ENCODE measurements at regions of chr12 and their contacts with region 1.

Region 1: DNA sequence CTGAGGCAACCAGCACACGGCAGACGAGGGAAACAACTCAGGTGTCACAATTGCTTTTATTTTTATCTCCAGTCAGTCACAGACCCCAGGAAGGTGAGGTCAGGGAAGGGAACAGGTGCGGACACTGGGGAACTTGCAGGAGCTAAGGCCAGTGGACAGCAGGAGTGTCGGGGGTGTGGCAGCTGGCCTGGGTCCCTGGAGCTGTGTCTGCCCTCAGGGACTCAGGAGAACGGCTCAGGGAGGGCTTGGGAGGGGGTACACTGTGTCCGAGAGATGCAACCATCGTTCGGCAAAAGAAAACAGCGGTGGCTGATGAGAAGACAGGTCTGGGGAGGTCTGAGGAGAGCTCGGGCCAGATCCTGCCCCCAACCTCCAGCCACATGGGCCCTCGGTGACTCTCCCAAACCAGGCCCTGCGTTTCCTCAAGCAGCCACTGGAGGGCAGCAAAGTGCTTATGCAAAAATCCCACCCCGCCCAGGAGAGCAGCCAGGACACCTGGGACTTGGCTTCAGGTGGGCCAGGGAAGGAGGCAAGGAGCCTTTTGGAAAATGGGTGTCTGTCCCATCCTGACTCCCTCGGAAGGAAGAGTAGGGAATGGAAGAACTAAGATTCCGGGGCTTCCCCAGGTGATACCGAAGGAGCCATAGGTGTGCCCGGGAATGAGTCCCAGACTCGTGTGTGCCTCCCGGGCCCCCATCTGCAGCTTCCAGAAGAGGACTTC is 24.1 kb upstream of the BCDIN3D start:
- DNase-seq: peak; percentile 46 to 80 (median 62)
- ATAC-seq: peak; percentile 86
- H3K4me3 ChIP-seq: no peak overlapping the region
- H3K4me3 Mint-ChIP-seq: no peak overlapping the region
- H3K27ac ChIP-seq: no peak overlapping the region
- H3K27ac Mint-ChIP-seq: no peak overlapping the region
- H3K4me1 ChIP-seq: no peaks in the 10 kb centered on the region
- H3K4me1 Mint-ChIP-seq: peaks cover 0 to 6% (median 0%) of the 10 kb centered on the region in 7 donors
- H3K27me3 ChIP-seq: no peaks in the 10 kb centered on the region
- H3K27me3 Mint-ChIP-seq: peaks cover 0 to 4% (median 0%) of the 10 kb centered on the region in 5 donors

Region 2: DNA sequence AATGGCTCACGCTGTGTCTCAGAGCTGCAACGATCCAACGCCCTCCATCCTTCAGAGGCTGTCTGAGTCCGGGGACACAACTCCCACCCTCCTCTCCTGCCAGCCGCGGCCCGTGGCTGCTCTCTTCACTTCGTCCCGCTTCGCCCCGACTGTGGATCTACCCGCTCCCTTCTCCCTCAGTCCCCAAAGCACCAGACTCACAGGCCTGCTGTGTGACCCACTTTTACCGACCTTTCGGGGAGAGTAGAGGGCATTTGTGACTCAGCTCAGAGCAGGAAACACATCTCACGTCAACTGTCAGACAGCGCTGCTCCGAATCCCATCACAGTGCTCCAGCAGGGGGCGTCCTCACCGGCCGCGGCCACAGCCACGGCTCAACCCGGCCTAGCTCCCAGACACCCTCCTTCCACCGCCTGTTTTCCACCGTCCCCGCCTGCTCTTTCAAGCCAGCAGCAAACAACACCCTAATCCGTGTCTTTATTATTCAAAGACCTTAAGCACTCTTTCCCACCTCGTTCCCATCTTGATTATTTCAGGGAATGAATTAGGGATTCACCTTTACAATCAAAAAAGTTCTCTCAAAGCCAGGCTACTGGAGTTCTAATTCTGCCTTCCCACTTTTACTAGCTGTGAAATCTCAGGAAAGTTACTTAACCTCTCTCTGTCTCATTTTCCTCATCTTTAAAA is 78.5 kb after region 1 on chr12:
- CTCF ChIA-PET with region 1: interaction called, 4 read pairs
- POLR2A ChIA-PET with region 1: no interaction called
- intact Hi-C with region 1: loop called in 1 of 2 experiments (anchors 2 kb)
- DNase-seq: peak; percentile 41 to 86 (median 62)
- ATAC-seq: peak; percentile 97
- H3K4me3 ChIP-seq: peak overlapping the region; percentile 24
- H3K4me3 Mint-ChIP-seq: peak overlapping the region; percentile 77 to 94 (median 88)
- H3K27ac ChIP-seq: no peak overlapping the region
- H3K27ac Mint-ChIP-seq: peak overlapping the region; percentile 4 to 93 (median 72)
- H3K4me1 ChIP-seq: no peaks in the 10 kb centered on the region
- H3K4me1 Mint-ChIP-seq: peaks cover 6 to 27% (median 15%) of the 10 kb centered on the region in 7 donors
- H3K27me3 ChIP-seq: no peaks in the 10 kb centered on the region
- H3K27me3 Mint-ChIP-seq: peaks cover 0 to 10% (median 7%) of the 10 kb centered on the region in 5 donors

Region 3: GRCh38 chr12:50055831-50056638 is 189.0 kb after region 1 on chr12:
- CTCF ChIA-PET with region 1: no interaction called
- POLR2A ChIA-PET with region 1: no interaction called
- intact Hi-C with region 1: loop called in 1 of 2 experiments (anchors 1 kb)
- DNase-seq: peak; percentile 41 to 64 (median 56)
- ATAC-seq: peak; percentile 79
- H3K4me3 ChIP-seq: peak overlapping the region; percentile 42
- H3K4me3 Mint-ChIP-seq: peak overlapping the region; percentile 66 to 96 (median 92)
- H3K27ac ChIP-seq: no peak overlapping the region
- H3K27ac Mint-ChIP-seq: peak overlapping the region in 2 of 9 donors; percentile 46 to 57
- H3K4me1 ChIP-seq: peaks cover 7 to 31% of the 10 kb centered on the region in 2 donors
- H3K4me1 Mint-ChIP-seq: peaks cover 17 to 48% (median 41%) of the 10 kb centered on the region in 7 donors
- H3K27me3 ChIP-seq: peaks cover 0 to 9% of the 10 kb centered on the region in 2 donors
- H3K27me3 Mint-ChIP-seq: peaks cover 38 to 56% (median 48%) of the 10 kb centered on the region in 5 donors

Region 4: GRCh38 chr12:50715174-50715573 is 848.2 kb after region 1 on chr12:
- CTCF ChIA-PET with region 1: no interaction called
- POLR2A ChIA-PET with region 1: no interaction called
- intact Hi-C with region 1: no loop called
- DNase-seq: no peak
- ATAC-seq: no peak
- H3K4me3 ChIP-seq: no peak overlapping the region
- H3K4me3 Mint-ChIP-seq: no peak overlapping the region
- H3K27ac ChIP-seq: no peak overlapping the region
- H3K27ac Mint-ChIP-seq: peak overlapping the region in 4 of 9 donors; percentile 17 to 45 (median 18)
- H3K4me1 ChIP-seq: no peaks in the 10 kb centered on the region
- H3K4me1 Mint-ChIP-seq: no peaks in the 10 kb centered on the region
- H3K27me3 ChIP-seq: no peaks in the 10 kb centered on the region
- H3K27me3 Mint-ChIP-seq: no peaks in the 10 kb centered on the region

Measured in naive thymus-derived CD4-positive, alpha-beta T cell (primary cell).